ENCODE measurements at regions of chr17 and their contacts with region 1.

Region 1: DNA sequence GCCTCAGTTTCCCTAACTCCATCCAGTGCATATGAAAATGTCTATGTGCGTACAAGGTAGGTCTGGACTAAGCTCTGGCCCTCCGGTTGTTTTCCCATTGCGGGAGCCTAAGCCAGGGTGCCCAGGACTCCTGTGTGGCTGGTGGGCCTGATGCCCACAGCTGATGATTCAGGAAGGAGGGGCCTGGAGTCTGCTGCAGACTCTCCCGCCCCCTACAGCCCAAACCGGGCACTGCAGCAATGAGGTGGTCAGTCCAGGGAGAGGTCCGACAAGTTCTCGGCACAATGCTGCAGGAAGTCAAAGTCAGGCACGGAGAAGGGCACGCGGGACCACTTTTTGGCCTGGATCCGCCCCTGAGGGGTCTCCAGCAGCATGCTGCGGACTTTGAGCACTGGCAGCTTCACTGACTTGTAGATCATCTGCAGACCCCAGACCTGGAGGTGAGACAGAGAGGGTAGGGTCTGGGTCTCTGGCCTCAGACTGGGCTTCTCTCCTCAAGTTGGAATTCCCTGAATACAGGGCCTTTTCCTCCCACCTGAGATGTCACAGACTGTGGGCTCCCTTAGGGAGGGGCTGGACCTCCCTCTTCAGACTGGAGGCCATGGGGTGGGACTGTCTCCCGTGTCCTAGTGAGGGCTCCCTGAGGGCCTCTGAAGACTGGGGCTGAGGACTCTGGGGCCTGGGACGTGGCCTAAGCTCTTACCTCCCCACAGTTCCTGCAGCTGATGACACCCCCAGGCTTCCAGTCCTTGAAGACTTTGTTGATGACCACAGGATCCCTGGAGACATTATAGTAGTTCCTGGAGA is 3.4 kb upstream of the ZNF385C start:
- DNase-seq: peak; percentile 46
- H3K4me3 Mint-ChIP-seq: no peak overlapping the region
- H3K27ac Mint-ChIP-seq: no peak overlapping the region
- H3K4me1 Mint-ChIP-seq: no peaks in the 10 kb centered on the region
- H3K27me3 Mint-ChIP-seq: peaks cover 13% of the 10 kb centered on the region

Region 2: DNA sequence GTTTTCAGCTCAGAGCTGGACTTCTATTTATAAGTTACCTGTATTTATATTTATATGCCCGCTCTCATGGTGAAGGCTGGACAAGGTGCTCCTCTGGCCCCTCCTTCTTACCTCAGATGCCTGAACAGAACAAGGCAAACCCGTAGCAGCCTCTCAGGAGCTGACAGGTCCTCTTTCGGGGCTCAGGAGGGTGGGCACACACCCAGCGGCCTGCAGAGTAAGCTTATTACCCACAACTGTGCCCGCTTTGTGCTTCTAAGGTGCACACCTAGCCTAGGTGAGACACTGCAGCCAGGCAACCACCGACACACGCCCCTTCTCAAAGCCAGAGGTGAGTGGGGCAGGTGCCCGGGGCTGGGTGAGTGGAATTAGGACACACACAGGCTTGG is 76.5 kb before region 1 on chr17:
- intact Hi-C with region 1: loop called (anchors 1 kb)
- DNase-seq: no peak
- H3K4me3 Mint-ChIP-seq: no peak overlapping the region
- H3K27ac Mint-ChIP-seq: no peak overlapping the region
- H3K4me1 Mint-ChIP-seq: peaks cover 16% of the 10 kb centered on the region
- H3K27me3 Mint-ChIP-seq: no peaks in the 10 kb centered on the region

Region 3: DNA sequence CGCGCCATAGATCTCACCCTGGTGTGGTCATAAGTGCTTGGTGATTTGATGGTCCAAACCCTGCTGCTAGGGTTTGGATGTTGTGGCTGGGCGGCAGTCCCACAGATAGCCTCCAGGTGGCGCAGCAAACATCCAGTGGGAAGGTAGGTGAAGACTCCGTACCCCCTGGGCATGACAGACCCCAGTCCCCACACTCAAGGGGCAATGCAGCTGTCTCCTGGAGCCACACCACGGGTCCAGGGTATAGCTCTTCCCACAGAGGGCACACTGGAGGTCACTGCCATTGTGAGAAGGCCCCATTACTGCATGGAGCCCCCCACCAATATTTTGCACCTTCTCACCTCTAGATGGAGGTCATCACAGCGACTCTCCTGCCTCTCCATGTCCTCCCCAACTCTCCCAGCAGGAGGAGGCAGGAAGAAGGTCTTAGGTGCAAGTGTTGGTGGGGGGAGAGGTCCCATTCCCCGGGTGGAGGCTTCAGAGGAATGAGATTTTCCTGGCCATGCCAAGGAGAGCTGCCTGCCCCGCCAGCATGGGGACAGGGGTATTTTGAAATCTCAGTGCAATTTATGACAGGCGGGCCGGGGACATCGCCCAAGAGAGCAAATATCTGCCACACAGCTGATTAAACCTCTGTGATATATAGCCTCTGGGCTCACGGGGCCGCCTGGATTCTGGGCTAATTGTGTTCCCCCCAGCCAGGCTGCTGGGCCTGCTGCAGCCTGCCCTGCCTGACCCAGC is 34.2 kb before region 1 on chr17:
- intact Hi-C with region 1: loop called (anchors 1 kb)
- DNase-seq: peak; percentile 58
- H3K4me3 Mint-ChIP-seq: no peak overlapping the region
- H3K27ac Mint-ChIP-seq: no peak overlapping the region
- H3K4me1 Mint-ChIP-seq: peaks cover 12% of the 10 kb centered on the region
- H3K27me3 Mint-ChIP-seq: peaks cover 11% of the 10 kb centered on the region